Activated CD8-positive, alpha-beta T cell treated with anti-CD3 and anti-CD28 coated beads for 36 hours (primary cell): ENCODE measurements at regions of chr18 and their contacts with region 1.

Region 1: DNA sequence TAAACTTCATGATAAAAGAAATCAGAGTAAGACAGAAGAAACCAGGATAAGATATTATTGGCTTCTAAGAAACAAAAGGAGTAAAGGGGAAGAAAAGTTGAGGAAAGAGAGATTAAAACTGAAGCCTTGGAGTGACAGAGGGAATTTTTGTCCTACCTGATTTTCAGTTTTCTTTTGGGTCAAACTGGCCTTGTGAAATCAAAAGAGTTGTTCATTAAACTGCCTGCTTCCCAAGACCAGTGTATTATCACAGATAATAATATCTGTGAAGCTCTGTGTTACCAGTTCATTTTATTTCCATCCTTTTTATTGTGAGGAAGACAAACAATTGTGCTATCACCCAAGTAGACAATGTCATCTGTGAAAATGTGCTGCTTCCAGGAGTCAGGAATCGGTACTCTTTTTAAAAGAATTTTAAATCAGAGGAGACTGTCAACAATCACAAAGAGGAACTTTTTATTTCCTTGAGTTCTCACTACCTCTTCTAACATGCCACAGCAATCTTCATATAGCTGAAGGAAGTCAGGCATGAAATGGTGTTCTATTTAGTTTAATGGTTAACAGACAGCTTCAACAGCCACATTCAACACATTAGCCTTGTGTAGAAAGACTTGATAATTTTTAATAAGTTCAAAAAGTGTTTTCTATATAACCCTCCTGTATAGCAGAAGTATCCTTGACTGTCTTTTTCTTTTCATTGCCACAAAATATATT is 554.8 kb downstream of the PIK3C3 start:
- DNase-seq: no peak
- ATAC-seq: no peak
- H3K4me3 Mint-ChIP-seq: no peak overlapping the region
- H3K27ac Mint-ChIP-seq: no peak overlapping the region
- H3K4me1 Mint-ChIP-seq: no peaks in the 10 kb centered on the region
- H3K27me3 Mint-ChIP-seq: no peaks in the 10 kb centered on the region
- CTCF ChIP-seq: no peak

Region 2: GRCh38 chr18:42564761-42565160 is 54.9 kb after region 1 on chr18:
- CTCF ChIA-PET with region 1: no interaction called
- POLR2A ChIA-PET with region 1: no interaction called
- intact Hi-C with region 1: loop called (anchors 10 kb)
- DNase-seq: no peak
- ATAC-seq: no peak
- H3K4me3 Mint-ChIP-seq: no peak overlapping the region
- H3K27ac Mint-ChIP-seq: no peak overlapping the region
- H3K4me1 Mint-ChIP-seq: no peaks in the 10 kb centered on the region
- H3K27me3 Mint-ChIP-seq: no peaks in the 10 kb centered on the region
- CTCF ChIP-seq: no peak